Ovary (tissue), 10 donors: ENCODE measurements at regions of chrX and their contacts with region 1.

Region 1: GRCh38 chrX:9048801-9049200 is 14.9 kb upstream of the FAM9B start:
- DNase-seq: no peak
- H3K4me3 ChIP-seq: no peak overlapping the region
- H3K27ac ChIP-seq: no peak overlapping the region
- H3K4me1 ChIP-seq: no peaks in the 10 kb centered on the region
- H3K27me3 ChIP-seq: no peaks in the 10 kb centered on the region
- CTCF ChIP-seq: no peak
- EP300 ChIP-seq: no peak
- POLR2A ChIP-seq: no peak

Region 2: DNA sequence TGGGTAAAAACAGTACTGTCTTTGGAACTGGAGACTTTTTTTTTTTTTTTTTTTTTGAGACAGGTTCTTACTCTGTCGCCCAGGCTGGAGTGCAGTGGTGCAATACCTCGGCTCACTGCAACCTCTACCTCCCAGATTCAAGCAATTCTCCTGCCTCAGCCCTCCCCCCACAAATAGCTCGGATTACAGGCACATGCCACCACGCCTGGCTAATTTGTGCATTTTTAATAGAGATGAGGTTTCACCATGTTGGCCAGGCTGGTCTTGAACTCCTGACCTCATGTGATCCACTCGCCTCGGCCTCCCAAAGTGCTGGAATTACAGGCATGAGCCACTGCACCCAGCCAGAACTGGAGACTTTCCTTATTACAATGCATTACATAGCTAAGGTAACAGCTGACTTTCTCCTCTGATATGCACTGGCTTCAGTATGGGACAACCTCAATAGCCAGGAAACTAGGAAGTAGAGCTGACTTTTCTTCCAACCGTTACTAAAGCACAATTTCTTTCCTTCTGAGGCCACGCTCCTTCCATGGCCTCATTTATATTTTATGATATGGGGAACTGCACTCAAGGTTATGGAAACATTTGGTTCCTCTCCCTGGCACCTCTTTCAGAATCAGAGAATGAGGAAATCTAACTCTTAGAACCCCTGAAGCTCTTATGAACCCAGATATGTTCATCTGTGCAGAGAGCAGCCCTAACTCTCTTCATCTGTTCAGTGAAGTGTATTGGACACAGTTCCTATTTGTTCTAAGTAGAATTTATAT is 38.7 kb after region 1 on chrX:
- intact Hi-C with region 1: loop called in 1 of 4 experiments (anchors 1 kb)
- DNase-seq: no peak
- H3K4me3 ChIP-seq: no peak overlapping the region
- H3K27ac ChIP-seq: no peak overlapping the region
- H3K4me1 ChIP-seq: no peaks in the 10 kb centered on the region
- H3K27me3 ChIP-seq: no peaks in the 10 kb centered on the region
- CTCF ChIP-seq: no peak
- EP300 ChIP-seq: no peak
- POLR2A ChIP-seq: no peak

Region 3: GRCh38 chrX:10014462-10015356 is 965.9 kb after region 1 on chrX:
- intact Hi-C with region 1: no loop called
- DNase-seq: peak; percentile 88 to 91 (median 90)
- H3K4me3 ChIP-seq: peak overlapping the region; percentile 54
- H3K27ac ChIP-seq: peak overlapping the region; percentile 85 to 92
- H3K4me1 ChIP-seq: no peaks in the 10 kb centered on the region
- H3K27me3 ChIP-seq: no peaks in the 10 kb centered on the region
- CTCF ChIP-seq: peak in 1 of 3 donors; percentile 6
- EP300 ChIP-seq: no peak
- POLR2A ChIP-seq: peak; percentile 62